IMR-90 (cell line): ENCODE measurements at regions of chr19 and their contacts with region 1.

Region 1: GRCh38 chr19:14571695-14572490 is at the start of gene NDUFB7:
- DNase-seq: peak; percentile 95
- ATAC-seq: peak; percentile 94
- H3K4me3 ChIP-seq: peak within 1 kb of the TSS; percentile 79
- H3K27ac ChIP-seq: peak within 1 kb of the TSS; percentile 87
- H3K4me1 ChIP-seq: peaks cover 3% of the 10 kb centered on the region; the same call in 1 of the 2 replicates
- H3K27me3 ChIP-seq: no peaks in the 10 kb centered on the region
- CTCF ChIP-seq: peak; percentile 85
- POLR2A ChIP-seq: 0 out of 2 replicates have a peak, but pooled peaks have one; percentile 31
- RAD21 ChIP-seq: peak; percentile 22; the same call in 1 of the 2 replicates
- total RNA-seq, gene NDUFB7: 337 and 436 TPM in 2 replicates

Region 2: GRCh38 chr19:14479975-14480699 is 91.8 kb before region 1 on chr19:
- CTCF ChIA-PET with region 1: no interaction called
- POLR2A ChIA-PET with region 1: no interaction called
- dilution Hi-C with region 1: no loop called
- in situ Hi-C with region 1: no loop called
- intact Hi-C with region 1: no loop called
- DNase-seq: peak; percentile 20
- ATAC-seq: peak; percentile 38
- H3K4me3 ChIP-seq: no peak overlapping the region
- H3K27ac ChIP-seq: peak overlapping the region; percentile 4; the same call in 1 of the 2 replicates
- H3K4me1 ChIP-seq: peaks cover 30% of the 10 kb centered on the region
- H3K27me3 ChIP-seq: no peaks in the 10 kb centered on the region
- CTCF ChIP-seq: peak; percentile 69
- POLR2A ChIP-seq: no peak
- RAD21 ChIP-seq: peak; percentile 46

Region 3: DNA sequence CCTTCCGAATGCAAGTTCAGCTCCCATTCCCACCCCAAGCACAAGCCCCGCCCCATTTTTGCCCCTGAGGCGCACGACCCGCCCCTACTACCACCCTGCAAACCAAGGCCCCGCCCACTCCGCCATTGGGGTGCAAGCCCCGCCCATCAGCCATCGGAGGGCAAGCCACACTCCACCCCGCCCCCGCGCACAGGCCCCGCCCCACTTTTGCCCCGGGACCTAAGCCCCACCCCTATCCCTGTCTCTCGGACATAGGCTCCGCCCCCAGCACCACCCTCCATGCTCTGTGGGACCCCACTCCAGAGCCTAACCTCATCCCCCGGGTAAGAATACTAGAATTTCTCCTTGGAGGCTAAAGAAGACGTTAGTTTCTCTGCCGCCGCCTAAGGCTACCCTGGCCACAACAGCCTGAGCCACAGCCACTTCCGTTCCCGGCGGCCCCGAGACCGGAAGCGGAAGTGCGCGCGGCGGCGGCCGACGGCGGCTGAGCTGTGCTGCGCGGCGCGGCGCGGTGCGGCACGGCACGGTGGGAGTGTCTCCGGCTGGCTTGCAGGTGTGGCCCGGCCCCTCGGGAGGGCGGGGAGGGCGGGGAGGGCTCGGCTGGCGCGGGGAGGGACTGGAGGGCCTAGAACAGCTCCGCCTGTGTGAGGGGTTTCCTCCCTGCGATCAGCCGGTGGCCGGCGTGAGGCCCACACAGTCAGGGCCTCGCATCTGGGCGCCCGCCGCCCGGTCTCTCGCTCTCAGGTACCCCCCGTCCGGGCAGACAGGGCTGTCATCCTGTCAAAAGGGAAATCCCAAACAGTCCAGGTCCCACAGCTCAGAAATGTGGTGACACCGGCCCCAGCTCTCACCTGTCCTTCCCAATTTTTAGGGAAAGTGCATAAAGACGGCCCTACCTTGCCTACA is 118.0 kb after region 1 on chr19 and contains the start of gene ZNF333:
- CTCF ChIA-PET with region 1: interaction called, 32 read pairs
- POLR2A ChIA-PET with region 1: interaction called, 4 read pairs
- dilution Hi-C with region 1: no loop called
- in situ Hi-C with region 1: loop called (anchors 5 kb)
- intact Hi-C with region 1: loop called (anchors 1 kb)
- DNase-seq: peak; percentile 83
- ATAC-seq: peak; percentile 98
- H3K4me3 ChIP-seq: peak within 1 kb of the TSS; percentile 97
- H3K27ac ChIP-seq: peak within 1 kb of the TSS; percentile 99
- H3K4me1 ChIP-seq: no peaks in the 10 kb centered on the region
- H3K27me3 ChIP-seq: no peaks in the 10 kb centered on the region
- CTCF ChIP-seq: no peak
- POLR2A ChIP-seq: peak; percentile 84
- RAD21 ChIP-seq: no peak
- total RNA-seq, gene ZNF333: 11.9 and 15.1 TPM in 2 replicates

Region 4: DNA sequence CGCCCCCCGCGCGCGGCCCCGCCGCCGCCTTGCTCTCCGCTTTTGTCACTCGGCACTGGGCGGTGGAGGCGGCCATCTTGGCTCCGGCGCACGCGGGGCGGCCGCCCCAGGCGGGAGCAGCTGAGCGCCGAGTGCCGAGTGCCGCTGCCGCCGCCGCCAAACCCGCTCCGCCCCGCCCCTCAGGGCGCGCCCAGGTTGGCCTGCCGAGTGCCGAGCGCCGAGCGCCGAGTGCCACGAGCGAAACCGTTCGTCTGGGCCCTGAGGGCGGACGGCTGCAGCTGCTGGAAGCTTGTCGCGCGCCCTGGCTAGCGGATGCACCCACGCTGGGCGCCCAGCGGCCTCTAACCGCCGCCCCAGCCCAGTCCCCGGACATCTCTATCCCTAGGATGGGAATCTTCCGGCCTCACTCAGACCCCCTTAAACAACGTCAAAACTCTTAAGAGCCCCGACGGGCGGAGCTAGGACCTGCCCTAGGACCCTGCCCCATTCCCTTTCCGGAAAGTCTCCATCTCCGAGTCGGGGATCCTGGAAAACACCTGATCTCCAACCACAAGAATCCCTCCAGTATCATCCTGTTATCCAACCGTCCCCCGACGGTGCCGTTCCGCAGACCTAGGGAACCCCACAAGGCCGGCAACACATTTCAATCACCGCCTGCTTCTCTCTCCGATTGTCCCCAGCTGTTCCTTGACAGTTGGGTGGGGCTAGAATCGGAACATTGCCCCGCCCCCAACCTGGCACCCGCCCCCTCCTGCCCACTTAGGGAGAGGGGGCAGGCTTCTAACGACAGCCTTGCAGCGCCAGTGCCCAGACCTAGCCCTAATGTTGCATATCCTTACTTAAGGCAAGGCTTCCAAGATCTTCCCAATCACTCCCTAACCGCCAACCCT is 861.0 kb after region 1 on chr19:
- CTCF ChIA-PET with region 1: no interaction called
- POLR2A ChIA-PET with region 1: no interaction called
- dilution Hi-C with region 1: no loop called
- in situ Hi-C with region 1: loop called (anchors 25 kb)
- intact Hi-C with region 1: no loop called
- DNase-seq: peak; percentile 87
- ATAC-seq: peak; percentile 94
- H3K4me3 ChIP-seq: peak overlapping the region; percentile 51
- H3K27ac ChIP-seq: peak overlapping the region; percentile 48
- H3K4me1 ChIP-seq: peaks cover 30% of the 10 kb centered on the region
- H3K27me3 ChIP-seq: no peaks in the 10 kb centered on the region
- CTCF ChIP-seq: no peak
- POLR2A ChIP-seq: peak; percentile 61; the same call in 1 of the 2 replicates
- RAD21 ChIP-seq: no peak; the same call in 1 of the 2 replicates